PC-3 (cell line): ENCODE measurements at regions of chr7 and their contacts with region 1.

Region 1: DNA sequence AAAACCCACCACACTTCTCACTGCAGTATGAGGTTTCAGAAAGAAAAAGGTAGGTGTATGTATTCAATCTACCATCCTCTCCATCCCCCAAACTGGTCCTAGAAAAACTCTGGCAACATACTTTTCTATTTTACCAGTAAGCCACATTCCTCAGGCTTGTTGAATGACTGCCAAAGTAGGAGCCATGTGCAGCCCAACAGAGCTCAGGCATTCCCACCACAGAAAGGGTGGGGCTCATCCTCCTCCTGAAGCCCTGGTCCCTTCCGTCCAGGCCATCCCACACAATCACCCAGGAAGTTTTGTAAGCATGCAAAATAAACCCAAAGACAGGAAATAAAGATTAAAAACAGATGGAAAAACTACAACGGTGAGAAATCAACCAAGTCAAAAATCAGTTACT is 57.2 kb downstream of the MAD1L1 start:
- DNase-seq: peak; percentile 90
- ATAC-seq: peak; percentile 94
- H3K4me3 ChIP-seq: no peak overlapping the region
- H3K27ac ChIP-seq: peak overlapping the region; percentile 57
- H3K4me1 ChIP-seq: peaks cover 29% of the 10 kb centered on the region
- H3K27me3 ChIP-seq: no peaks in the 10 kb centered on the region
- CTCF ChIP-seq: no peak

Region 2: GRCh38 chr7:1619152-1620006 is 556.1 kb before region 1 on chr7:
- CTCF ChIA-PET with region 1: no interaction called
- POLR2A ChIA-PET with region 1: interaction called, 25 read pairs
- intact Hi-C with region 1: no loop called
- DNase-seq: no peak
- ATAC-seq: no peak
- H3K4me3 ChIP-seq: no peak overlapping the region
- H3K27ac ChIP-seq: no peak overlapping the region
- H3K4me1 ChIP-seq: no peaks in the 10 kb centered on the region
- H3K27me3 ChIP-seq: peaks cover 12% of the 10 kb centered on the region
- CTCF ChIP-seq: no peak

Region 3: GRCh38 chr7:1940402-1940786 is 235.1 kb before region 1 on chr7:
- CTCF ChIA-PET with region 1: no interaction called
- POLR2A ChIA-PET with region 1: no interaction called
- intact Hi-C with region 1: no loop called
- DNase-seq: no peak
- ATAC-seq: no peak; the same call in 1 of the 2 replicates
- H3K4me3 ChIP-seq: no peak overlapping the region
- H3K27ac ChIP-seq: no peak overlapping the region
- H3K4me1 ChIP-seq: no peaks in the 10 kb centered on the region
- H3K27me3 ChIP-seq: no peaks in the 10 kb centered on the region
- CTCF ChIP-seq: no peak

Region 4: GRCh38 chr7:2913760-2914387 is 738.4 kb after region 1 on chr7:
- CTCF ChIA-PET with region 1: no interaction called
- POLR2A ChIA-PET with region 1: no interaction called
- intact Hi-C with region 1: no loop called
- DNase-seq: no peak
- ATAC-seq: no peak
- H3K4me3 ChIP-seq: no peak overlapping the region
- H3K27ac ChIP-seq: no peak overlapping the region
- H3K4me1 ChIP-seq: no peaks in the 10 kb centered on the region
- H3K27me3 ChIP-seq: peaks cover 15% of the 10 kb centered on the region; the same call in 1 of the 2 replicates
- CTCF ChIP-seq: no peak